Caco-2 (cell line): ENCODE measurements at regions of chr11 and their contacts with region 1.

Region 1: DNA sequence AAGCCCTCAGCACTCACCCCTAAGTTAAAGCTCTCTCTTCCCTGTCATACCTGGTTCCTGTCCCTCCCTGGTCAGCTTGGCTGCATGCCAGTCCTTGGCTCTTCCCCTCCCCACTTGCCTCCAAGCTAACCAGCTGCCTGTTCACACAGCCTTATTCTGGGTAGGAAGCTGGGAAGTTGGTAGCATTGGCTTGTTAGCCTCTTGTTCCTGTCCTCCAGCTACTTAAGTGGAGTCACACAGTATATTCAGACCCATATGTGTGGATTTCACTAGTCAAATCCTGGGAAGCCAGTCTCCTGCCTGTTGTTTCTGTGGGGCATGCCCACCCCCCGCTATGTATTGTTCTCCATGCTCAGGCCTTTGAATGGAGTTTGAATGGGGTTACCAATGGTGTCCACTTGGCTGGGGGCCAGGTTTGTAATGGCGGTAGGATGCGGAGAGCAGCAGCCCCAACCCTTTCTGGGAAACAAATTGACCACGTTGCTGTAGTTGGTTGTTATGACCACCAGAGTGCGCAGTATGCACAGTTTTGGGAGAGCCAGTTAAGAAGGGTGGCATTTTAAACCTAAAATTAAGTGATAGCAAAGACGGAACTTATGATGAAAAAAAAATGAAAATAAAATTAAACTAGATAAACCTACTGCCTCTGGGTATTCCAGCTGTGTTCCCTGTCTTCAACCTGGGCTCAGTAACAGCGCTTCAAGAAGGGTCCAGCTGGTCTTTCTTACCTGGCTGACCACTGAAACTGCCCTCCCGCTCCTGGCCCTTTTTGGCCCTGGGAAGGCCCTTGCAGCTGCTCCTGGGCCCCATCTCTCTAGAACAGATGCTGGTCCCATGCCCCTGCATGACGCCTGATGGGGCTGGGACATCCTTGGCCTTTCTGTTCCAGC is 10.7 kb upstream of the RPS3 start:
- DNase-seq: peak; percentile 86 to 87
- H3K4me3 ChIP-seq: no peak overlapping the region
- H3K4me3 Mint-ChIP-seq: no peak overlapping the region
- H3K27ac Mint-ChIP-seq: no peak overlapping the region
- H3K4me1 ChIP-seq: peaks cover 46% of the 10 kb centered on the region
- H3K4me1 Mint-ChIP-seq: peaks cover 10% of the 10 kb centered on the region
- H3K27me3 ChIP-seq: no peaks in the 10 kb centered on the region
- H3K27me3 Mint-ChIP-seq: no peaks in the 10 kb centered on the region
- CTCF ChIP-seq: peak; percentile 92 to 98

Region 2: DNA sequence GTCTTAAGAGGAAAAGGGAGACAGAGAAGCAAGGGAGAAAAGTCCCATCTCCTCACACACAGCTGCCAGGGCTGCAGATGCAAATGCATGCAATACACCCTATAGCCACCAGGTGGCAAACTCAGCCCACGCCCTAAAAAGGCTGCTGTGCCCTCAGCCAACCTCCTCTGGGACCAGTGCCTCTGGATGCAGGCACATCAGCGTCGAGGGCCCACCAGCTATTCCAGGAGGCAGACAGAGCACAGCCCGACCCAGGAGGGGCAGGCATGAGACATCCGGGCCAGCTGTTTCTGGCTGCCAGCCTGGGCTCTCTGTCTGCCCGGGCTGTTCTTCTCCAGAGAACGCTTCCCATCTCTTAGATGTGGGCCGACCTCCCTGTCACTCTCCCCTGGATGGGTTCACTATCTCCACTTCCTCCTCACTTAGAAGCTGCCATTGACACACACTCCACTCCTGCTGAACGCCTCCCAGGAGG is 108.4 kb before region 1 on chr11:
- CTCF ChIA-PET with region 1: interaction called, 31 read pairs
- POLR2A ChIA-PET with region 1: no interaction called
- intact Hi-C with region 1: loop called (anchors 1 kb)
- DNase-seq: peak; percentile 86 to 92
- H3K4me3 ChIP-seq: no peak overlapping the region
- H3K4me3 Mint-ChIP-seq: no peak overlapping the region
- H3K27ac Mint-ChIP-seq: peak overlapping the region; percentile 88
- H3K4me1 ChIP-seq: peaks cover 34% of the 10 kb centered on the region
- H3K4me1 Mint-ChIP-seq: peaks cover 32% of the 10 kb centered on the region
- H3K27me3 ChIP-seq: no peaks in the 10 kb centered on the region
- H3K27me3 Mint-ChIP-seq: no peaks in the 10 kb centered on the region
- CTCF ChIP-seq: peak; percentile 99

Region 3: GRCh38 chr11:75342903-75343870 is 45.4 kb before region 1 on chr11:
- CTCF ChIA-PET with region 1: interaction called, 10 read pairs
- POLR2A ChIA-PET with region 1: interaction called, 4 read pairs
- intact Hi-C with region 1: loop called (anchors 1 kb)
- DNase-seq: peak; percentile 95
- H3K4me3 ChIP-seq: no peak overlapping the region
- H3K4me3 Mint-ChIP-seq: peak overlapping the region; percentile 51
- H3K27ac Mint-ChIP-seq: peak overlapping the region; percentile 75
- H3K4me1 ChIP-seq: peaks cover 78% of the 10 kb centered on the region
- H3K4me1 Mint-ChIP-seq: peaks cover 65% of the 10 kb centered on the region
- H3K27me3 ChIP-seq: no peaks in the 10 kb centered on the region
- H3K27me3 Mint-ChIP-seq: no peaks in the 10 kb centered on the region
- CTCF ChIP-seq: no peak

Region 4: GRCh38 chr11:75399344-75400145 is 10.9 kb after region 1 on chr11 and contains the start of gene RPS3:
- CTCF ChIA-PET with region 1: interaction called, 6 read pairs
- POLR2A ChIA-PET with region 1: interaction called, 5 read pairs
- intact Hi-C with region 1: loop called (anchors 1 kb)
- DNase-seq: peak; percentile 95 to 97
- H3K4me3 ChIP-seq: peak within 1 kb of the TSS; percentile 80
- H3K4me3 Mint-ChIP-seq: peak within 1 kb of the TSS; percentile 99
- H3K27ac Mint-ChIP-seq: peak within 1 kb of the TSS; percentile 100
- H3K4me1 ChIP-seq: peaks cover 35% of the 10 kb centered on the region
- H3K4me1 Mint-ChIP-seq: peaks cover 40% of the 10 kb centered on the region
- H3K27me3 ChIP-seq: no peaks in the 10 kb centered on the region
- H3K27me3 Mint-ChIP-seq: no peaks in the 10 kb centered on the region
- CTCF ChIP-seq: peak in 1 of 2 experiments; percentile 60
- total RNA-seq, gene RPS3: 6,280 and 6,333 TPM in 2 replicates

Region 5: DNA sequence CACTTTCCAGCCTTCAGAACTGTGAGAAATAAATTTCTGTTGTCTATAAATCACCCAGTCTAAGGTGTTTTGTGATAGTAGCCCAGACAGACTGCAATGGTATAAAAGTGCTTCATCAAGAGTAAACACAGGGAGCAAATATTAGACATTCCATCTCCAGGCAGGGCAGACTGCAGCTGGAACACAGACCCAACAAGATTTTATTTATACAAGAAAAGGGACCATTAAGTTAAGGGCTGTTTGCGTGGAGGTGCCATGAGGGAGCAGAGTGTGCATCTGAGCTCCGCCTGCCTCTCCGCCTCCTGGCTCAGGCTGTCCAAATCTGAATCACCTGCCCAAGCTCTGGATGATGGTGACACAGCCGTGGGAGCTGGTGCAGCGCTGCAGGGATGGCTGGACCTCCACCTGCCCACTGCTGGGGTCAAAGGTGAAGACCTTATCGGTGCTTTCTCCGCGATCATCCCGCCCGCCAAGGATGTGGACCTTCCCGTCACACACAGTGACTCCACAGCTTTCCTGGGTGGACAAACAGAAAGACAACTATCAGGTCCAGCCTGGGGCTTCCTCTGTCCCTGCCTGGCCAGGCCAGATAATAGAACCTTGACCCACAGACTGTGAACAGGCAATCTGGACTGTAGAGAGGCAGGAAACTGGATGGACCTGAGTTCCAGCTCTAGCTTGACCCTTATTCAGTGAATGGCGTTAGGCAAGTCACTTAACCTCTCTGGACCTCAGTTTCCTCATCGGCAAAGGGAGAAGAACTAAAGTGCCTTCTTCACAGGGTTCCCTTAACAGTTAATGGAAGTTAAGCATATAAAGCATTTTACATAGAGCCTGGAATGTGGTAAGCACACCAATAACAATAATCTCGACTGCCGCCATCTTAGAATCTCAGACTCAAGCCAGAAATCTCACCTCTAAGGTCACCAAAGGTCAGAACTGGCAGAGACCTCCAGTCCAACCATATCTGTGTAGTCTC is 33.9 kb after region 1 on chr11:
- CTCF ChIA-PET with region 1: interaction called, 11 read pairs
- POLR2A ChIA-PET with region 1: interaction called, 3 read pairs
- intact Hi-C with region 1: loop called (anchors 1 kb)
- DNase-seq: peak; percentile 97 to 98
- H3K4me3 ChIP-seq: no peak overlapping the region
- H3K4me3 Mint-ChIP-seq: peak overlapping the region; percentile 66
- H3K27ac Mint-ChIP-seq: peak overlapping the region; percentile 92
- H3K4me1 ChIP-seq: peaks cover 56% of the 10 kb centered on the region
- H3K4me1 Mint-ChIP-seq: peaks cover 54% of the 10 kb centered on the region
- H3K27me3 ChIP-seq: no peaks in the 10 kb centered on the region
- H3K27me3 Mint-ChIP-seq: no peaks in the 10 kb centered on the region
- CTCF ChIP-seq: no peak

Region 6: DNA sequence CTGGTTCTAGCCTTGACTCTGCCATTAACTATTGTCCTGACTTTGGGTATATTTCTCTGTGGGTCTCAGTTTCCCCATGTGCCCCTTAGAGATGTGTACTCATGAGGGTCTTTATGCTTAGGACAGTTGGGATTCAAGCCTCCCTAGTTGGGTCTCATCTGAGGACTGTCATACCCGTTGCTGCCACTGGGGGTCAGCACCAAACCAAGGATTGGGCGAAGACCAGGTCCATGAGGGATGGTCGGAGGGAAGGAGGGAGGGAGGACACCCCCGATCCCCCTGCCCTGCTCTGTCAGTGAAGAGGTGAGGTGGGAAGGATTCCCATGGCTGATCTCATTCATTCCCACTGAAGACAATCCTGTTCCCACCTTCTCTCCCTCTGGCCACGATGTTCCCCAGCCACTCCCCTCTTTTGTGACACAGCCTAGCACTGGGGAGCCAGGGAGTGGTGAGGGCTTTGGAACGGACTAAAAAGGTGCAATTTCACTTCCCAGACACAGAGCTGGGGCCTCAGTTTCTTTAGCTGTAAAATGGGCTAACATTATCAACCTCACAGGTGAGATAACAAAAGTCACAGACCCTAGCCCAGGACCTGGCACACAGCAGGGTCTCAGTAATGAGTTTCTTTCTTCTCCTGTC is 56.8 kb after region 1 on chr11:
- CTCF ChIA-PET with region 1: interaction called, 14 read pairs
- POLR2A ChIA-PET with region 1: no interaction called
- intact Hi-C with region 1: loop called (anchors 2 kb)
- DNase-seq: peak; percentile 84 to 92
- H3K4me3 ChIP-seq: no peak overlapping the region
- H3K4me3 Mint-ChIP-seq: no peak overlapping the region
- H3K27ac Mint-ChIP-seq: no peak overlapping the region
- H3K4me1 ChIP-seq: no peaks in the 10 kb centered on the region
- H3K4me1 Mint-ChIP-seq: no peaks in the 10 kb centered on the region
- H3K27me3 ChIP-seq: no peaks in the 10 kb centered on the region
- H3K27me3 Mint-ChIP-seq: no peaks in the 10 kb centered on the region
- CTCF ChIP-seq: peak; percentile 99 to 100

Region 7: GRCh38 chr11:75532200-75533048 is 143.8 kb after region 1 on chr11:
- CTCF ChIA-PET with region 1: interaction called, 8 read pairs
- POLR2A ChIA-PET with region 1: no interaction called
- intact Hi-C with region 1: loop called (anchors 1 kb)
- DNase-seq: peak; percentile 83 to 91
- H3K4me3 ChIP-seq: no peak overlapping the region
- H3K4me3 Mint-ChIP-seq: no peak overlapping the region
- H3K27ac Mint-ChIP-seq: no peak overlapping the region
- H3K4me1 ChIP-seq: peaks cover 10% of the 10 kb centered on the region
- H3K4me1 Mint-ChIP-seq: peaks cover 11% of the 10 kb centered on the region
- H3K27me3 ChIP-seq: no peaks in the 10 kb centered on the region
- H3K27me3 Mint-ChIP-seq: no peaks in the 10 kb centered on the region
- CTCF ChIP-seq: peak; percentile 95 to 99